ENCODE measurements at regions of chr1 and their contacts with region 1.

Region 1: DNA sequence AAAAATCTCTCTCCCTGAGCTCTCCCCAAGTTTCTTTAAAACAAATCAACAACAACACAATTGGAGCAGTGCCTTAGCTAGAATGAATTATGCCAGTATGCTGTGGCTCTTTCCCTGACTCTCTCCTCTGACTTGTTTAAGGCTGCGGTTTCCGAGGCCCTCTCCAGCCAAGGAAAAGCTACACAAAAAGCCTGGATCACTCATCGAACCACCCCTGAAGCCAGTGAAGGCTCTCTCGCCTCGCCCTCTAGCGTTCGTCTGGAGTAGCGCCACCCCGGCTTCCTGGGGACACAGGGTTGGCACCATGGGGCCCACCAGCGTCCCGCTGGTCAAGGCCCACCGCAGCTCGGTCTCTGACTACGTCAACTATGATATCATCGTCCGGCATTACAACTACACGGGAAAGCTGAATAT is 1.9 kb downstream of the S1PR1 start:
- DNase-seq: peak; percentile 77 to 87 (median 84)
- H3K4me3 ChIP-seq: peak overlapping the region; percentile 64
- H3K4me3 Mint-ChIP-seq: peak overlapping the region; percentile 90 to 100 (median 99)
- H3K27ac ChIP-seq: peak overlapping the region; percentile 71
- H3K27ac Mint-ChIP-seq: peak overlapping the region; percentile 78 to 100 (median 98)
- H3K4me1 ChIP-seq: peaks cover 59% of the 10 kb centered on the region
- H3K4me1 Mint-ChIP-seq: peaks cover 62 to 68% (median 68%) of the 10 kb centered on the region in 3 donors
- H3K27me3 ChIP-seq: no peaks in the 10 kb centered on the region
- H3K27me3 Mint-ChIP-seq: peaks cover 0 to 5% of the 10 kb centered on the region in 2 donors

Region 2: GRCh38 chr1:100928128-100928527 is 310.6 kb before region 1 on chr1:
- CTCF ChIA-PET with region 1: interaction called, 39 read pairs
- POLR2A ChIA-PET with region 1: interaction called, 6 read pairs
- DNase-seq: no peak
- H3K4me3 ChIP-seq: peak overlapping the region; percentile 36
- H3K4me3 Mint-ChIP-seq: no peak overlapping the region
- H3K27ac ChIP-seq: no peak overlapping the region
- H3K27ac Mint-ChIP-seq: no peak overlapping the region
- H3K4me1 ChIP-seq: peaks cover 85% of the 10 kb centered on the region
- H3K4me1 Mint-ChIP-seq: peaks cover 24 to 44% (median 33%) of the 10 kb centered on the region in 3 donors
- H3K27me3 ChIP-seq: no peaks in the 10 kb centered on the region
- H3K27me3 Mint-ChIP-seq: no peaks in the 10 kb centered on the region

Region 3: GRCh38 chr1:101112051-101112780 is 126.5 kb before region 1 on chr1:
- CTCF ChIA-PET with region 1: interaction called, 11 read pairs
- POLR2A ChIA-PET with region 1: interaction called, 30 read pairs
- DNase-seq: peak; percentile 56 to 91 (median 88)
- H3K4me3 ChIP-seq: peak overlapping the region; percentile 24
- H3K4me3 Mint-ChIP-seq: peak overlapping the region; percentile 3 to 75 (median 63)
- H3K27ac ChIP-seq: peak overlapping the region; percentile 72
- H3K27ac Mint-ChIP-seq: peak overlapping the region; percentile 96 to 100 (median 98)
- H3K4me1 ChIP-seq: peaks cover 50% of the 10 kb centered on the region
- H3K4me1 Mint-ChIP-seq: peaks cover 43 to 73% (median 72%) of the 10 kb centered on the region in 3 donors
- H3K27me3 ChIP-seq: no peaks in the 10 kb centered on the region
- H3K27me3 Mint-ChIP-seq: peaks cover 0 to 3% of the 10 kb centered on the region in 2 donors

Region 4: GRCh38 chr1:101228424-101229134 is 10.1 kb before region 1 on chr1:
- CTCF ChIA-PET with region 1: interaction called, 10 read pairs
- POLR2A ChIA-PET with region 1: no interaction called
- DNase-seq: no peak
- H3K4me3 ChIP-seq: no peak overlapping the region
- H3K4me3 Mint-ChIP-seq: peak overlapping the region in 1 of 7 donors; percentile 41
- H3K27ac ChIP-seq: no peak overlapping the region
- H3K27ac Mint-ChIP-seq: peak overlapping the region in 6 of 8 donors; percentile 4 to 89 (median 52)
- H3K4me1 ChIP-seq: no peaks in the 10 kb centered on the region
- H3K4me1 Mint-ChIP-seq: peaks cover 22 to 52% (median 44%) of the 10 kb centered on the region in 3 donors
- H3K27me3 ChIP-seq: no peaks in the 10 kb centered on the region
- H3K27me3 Mint-ChIP-seq: no peaks in the 10 kb centered on the region

Region 5: GRCh38 chr1:101262630-101263348 is 24.1 kb after region 1 on chr1:
- CTCF ChIA-PET with region 1: interaction called, 10 read pairs
- POLR2A ChIA-PET with region 1: interaction called, 6 read pairs
- DNase-seq: peak in 2 of 5 donors; percentile 50 to 60
- H3K4me3 ChIP-seq: peak overlapping the region; percentile 37
- H3K4me3 Mint-ChIP-seq: peak overlapping the region; percentile 36 to 84 (median 74)
- H3K27ac ChIP-seq: no peak overlapping the region
- H3K27ac Mint-ChIP-seq: peak overlapping the region; percentile 82 to 95 (median 90)
- H3K4me1 ChIP-seq: peaks cover 99% of the 10 kb centered on the region
- H3K4me1 Mint-ChIP-seq: peaks cover 85 to 95% (median 90%) of the 10 kb centered on the region in 3 donors
- H3K27me3 ChIP-seq: no peaks in the 10 kb centered on the region
- H3K27me3 Mint-ChIP-seq: no peaks in the 10 kb centered on the region

Region 6: DNA sequence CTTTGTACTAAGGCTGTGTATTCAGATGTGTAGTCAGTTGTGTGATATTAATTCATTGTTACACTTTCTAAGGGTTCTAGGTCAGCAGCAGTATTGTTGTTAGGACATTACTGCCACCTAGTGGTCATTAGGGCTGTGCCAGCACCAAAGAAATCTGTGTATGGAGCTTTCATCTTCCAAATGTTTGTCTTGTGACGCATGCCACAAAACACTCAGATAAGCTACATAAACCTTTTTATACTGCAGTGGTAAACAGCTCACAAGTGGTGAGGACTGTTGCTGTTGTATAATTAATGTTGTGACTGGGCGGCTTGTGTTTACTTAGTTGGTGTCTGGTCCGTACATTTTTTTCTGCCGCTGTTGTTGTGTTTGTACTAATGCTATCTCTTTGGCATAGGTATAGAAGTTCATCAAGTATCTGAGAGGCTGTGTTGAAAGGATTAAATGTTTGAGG is 49.8 kb after region 1 on chr1:
- CTCF ChIA-PET with region 1: interaction called, 214 read pairs
- POLR2A ChIA-PET with region 1: interaction called, 15 read pairs
- DNase-seq: peak; percentile 32 to 75 (median 69)
- H3K4me3 ChIP-seq: peak overlapping the region; percentile 10
- H3K4me3 Mint-ChIP-seq: peak overlapping the region in 3 of 7 donors; percentile 10 to 49 (median 21)
- H3K27ac ChIP-seq: no peak overlapping the region
- H3K27ac Mint-ChIP-seq: peak overlapping the region in 7 of 8 donors; percentile 4 to 87 (median 78)
- H3K4me1 ChIP-seq: peaks cover 76% of the 10 kb centered on the region
- H3K4me1 Mint-ChIP-seq: peaks cover 67 to 83% (median 82%) of the 10 kb centered on the region in 3 donors
- H3K27me3 ChIP-seq: no peaks in the 10 kb centered on the region
- H3K27me3 Mint-ChIP-seq: no peaks in the 10 kb centered on the region